BJ (cell line): ENCODE measurements at regions of chr17 and their contacts with region 1.

Region 1: GRCh38 chr17:17496189-17497064 is at the start of gene RASD1:
- DNase-seq: no peak
- H3K4me3 ChIP-seq: peak within 1 kb of the TSS; percentile 64
- H3K27me3 ChIP-seq: no peaks in the 10 kb centered on the region
- CTCF ChIP-seq: peak; percentile 48
- polyA plus RNA-seq, gene RASD1: 0.83 and 0.90 TPM in 2 replicates

Region 2: GRCh38 chr17:17506811-17507464 is 10.5 kb after region 1 on chr17:
- CTCF ChIA-PET with region 1: interaction called, 44 read pairs
- POLR2A ChIA-PET with region 1: interaction called, 10 read pairs
- DNase-seq: no peak
- H3K4me3 ChIP-seq: no peak overlapping the region
- H3K27me3 ChIP-seq: no peaks in the 10 kb centered on the region
- CTCF ChIP-seq: no peak

Region 3: DNA sequence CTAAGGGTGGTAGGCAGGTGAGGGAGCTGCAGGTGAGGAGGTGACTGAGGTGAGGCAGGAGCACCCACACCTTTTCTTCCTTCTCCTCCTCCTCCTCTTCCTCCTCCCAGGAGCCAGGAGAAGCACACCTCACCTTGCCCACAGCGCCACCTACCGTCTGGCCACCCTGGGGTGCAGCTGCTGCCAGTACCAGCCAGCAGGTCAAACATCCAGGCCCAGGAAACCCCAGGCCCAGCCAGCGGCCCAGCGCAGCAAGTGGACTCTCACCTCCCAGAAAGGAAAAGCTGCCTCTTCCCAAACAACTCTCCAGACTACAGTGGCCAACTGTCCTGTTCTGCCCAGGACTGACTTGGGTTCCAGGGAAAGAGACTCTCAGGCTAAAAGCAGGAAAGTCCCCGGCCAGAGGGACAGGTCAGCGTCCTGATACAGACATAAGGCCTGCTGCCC is 72.3 kb after region 1 on chr17:
- CTCF ChIA-PET with region 1: interaction called, 149 read pairs
- POLR2A ChIA-PET with region 1: no interaction called
- DNase-seq: no peak
- H3K4me3 ChIP-seq: no peak overlapping the region
- H3K27me3 ChIP-seq: no peaks in the 10 kb centered on the region
- CTCF ChIP-seq: peak; percentile 84

Region 4: GRCh38 chr17:17591355-17592298 is 95.2 kb after region 1 on chr17 and contains the start of gene PEMT:
- CTCF ChIA-PET with region 1: interaction called, 14 read pairs
- POLR2A ChIA-PET with region 1: interaction called, 5 read pairs
- DNase-seq: peak; percentile 92
- H3K4me3 ChIP-seq: peak within 1 kb of the TSS; percentile 69
- H3K27me3 ChIP-seq: no peaks in the 10 kb centered on the region
- CTCF ChIP-seq: no peak
- polyA plus RNA-seq, gene PEMT: 29.8 and 50.7 TPM in 2 replicates

Region 5: DNA sequence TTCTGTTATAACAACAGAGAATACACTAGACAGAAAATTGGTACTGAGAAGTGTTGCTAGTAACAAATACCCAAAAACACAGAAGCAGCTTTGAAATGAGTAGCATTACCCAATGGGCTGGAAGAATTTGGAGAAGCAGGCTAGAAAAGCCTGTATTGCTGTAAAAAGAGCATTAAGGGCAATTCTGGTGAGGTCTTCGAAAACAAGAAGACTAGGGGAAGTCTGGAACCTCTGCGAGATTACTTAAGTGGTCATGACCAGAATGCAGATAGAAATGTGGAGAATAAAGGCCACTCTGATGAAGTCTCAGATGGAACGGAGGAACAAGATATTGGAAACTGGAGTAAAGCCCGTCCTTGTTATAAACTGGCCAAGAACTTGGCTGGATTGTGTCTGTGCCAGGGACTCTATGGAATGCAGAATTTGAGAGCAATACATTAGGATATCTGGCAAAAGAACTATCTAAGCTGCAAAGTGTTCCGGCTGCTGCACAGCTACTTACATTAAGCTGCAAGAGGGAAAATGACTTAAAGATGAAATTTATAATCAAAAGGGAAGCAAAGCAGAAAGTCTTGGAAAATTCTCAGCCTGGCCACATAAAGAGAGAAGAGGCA is 140.0 kb after region 1 on chr17:
- CTCF ChIA-PET with region 1: interaction called, 54 read pairs
- POLR2A ChIA-PET with region 1: no interaction called
- DNase-seq: no peak
- H3K4me3 ChIP-seq: no peak overlapping the region
- H3K27me3 ChIP-seq: peaks cover 3% of the 10 kb centered on the region; the same call in 1 of the 2 replicates
- CTCF ChIP-seq: no peak